ENCODE measurements at regions of chr7 and their contacts with region 1.

Region 1: DNA sequence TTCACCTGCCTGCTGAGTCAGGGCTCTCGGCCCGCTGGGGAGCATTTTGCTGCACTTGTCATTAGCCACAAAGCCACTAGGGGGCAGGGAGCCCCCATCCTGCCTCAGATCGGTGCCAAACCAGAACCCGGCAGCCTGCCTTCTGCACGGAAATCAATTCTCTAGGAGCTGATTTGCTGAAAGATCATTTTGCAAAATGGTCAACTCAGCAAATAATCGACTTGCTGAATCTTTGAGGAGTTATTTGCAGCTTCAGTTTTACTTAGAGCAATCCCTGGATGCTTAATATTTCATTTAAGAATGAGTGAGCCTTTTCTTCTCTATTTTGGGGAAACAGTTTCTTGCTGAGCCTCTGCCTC is 1.7 kb upstream of the GIMAP8 start:
- DNase-seq: peak; percentile 73 to 91 (median 88)
- ATAC-seq: peak; percentile 73
- H3K4me3 ChIP-seq: peak overlapping the region; percentile 65
- H3K4me3 Mint-ChIP-seq: peak overlapping the region; percentile 94 to 100 (median 98)
- H3K27ac ChIP-seq: peak overlapping the region; percentile 84
- H3K27ac Mint-ChIP-seq: peak overlapping the region; percentile 95 to 99 (median 97)
- H3K4me1 ChIP-seq: peaks cover 32 to 36% of the 10 kb centered on the region in 2 donors
- H3K4me1 Mint-ChIP-seq: peaks cover 36 to 54% (median 43%) of the 10 kb centered on the region in 7 donors
- H3K27me3 ChIP-seq: no peaks in the 10 kb centered on the region
- H3K27me3 Mint-ChIP-seq: no peaks in the 10 kb centered on the region

Region 2: DNA sequence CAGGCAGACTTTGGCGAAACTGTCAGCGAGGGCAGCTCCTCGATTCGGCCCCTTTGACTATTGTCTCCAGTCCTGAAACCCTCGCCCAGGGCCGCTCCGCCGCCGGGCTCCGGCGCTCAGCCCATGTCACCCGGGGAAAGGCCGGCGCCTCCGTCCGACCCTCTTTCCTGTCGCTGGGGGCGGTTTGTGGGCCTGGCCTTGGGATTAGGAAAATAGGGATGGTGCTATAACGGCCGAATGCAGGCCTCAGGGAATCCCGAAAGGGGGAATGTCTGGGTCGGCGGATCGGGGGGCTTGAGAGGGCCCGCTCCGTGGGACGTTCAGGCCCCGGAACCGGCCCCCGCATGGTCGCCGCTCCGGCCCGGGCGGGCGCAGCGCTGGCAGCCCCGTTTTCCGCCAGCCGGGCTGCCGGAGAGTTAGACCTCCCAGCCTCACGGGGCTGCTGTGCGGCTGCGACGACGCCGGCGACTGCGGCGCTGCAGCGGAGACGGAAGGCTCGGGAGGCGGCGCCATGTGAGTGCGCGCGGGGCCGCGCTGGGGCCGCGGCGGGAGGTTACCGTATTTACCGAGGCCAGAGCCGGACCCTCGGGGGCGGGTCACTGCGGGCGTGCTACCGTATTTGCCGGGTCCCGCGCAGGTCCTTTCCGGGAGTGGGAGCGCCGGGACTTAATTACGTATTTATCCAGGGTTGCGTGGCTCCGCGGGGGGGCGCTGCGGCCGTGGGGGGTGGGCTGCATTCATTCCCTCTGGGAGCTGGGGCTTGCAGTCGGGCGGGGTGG is 43.8 kb before region 1 on chr7:
- CTCF ChIA-PET with region 1: interaction called, 5 read pairs
- POLR2A ChIA-PET with region 1: interaction called, 4 read pairs
- intact Hi-C with region 1: loop called in 1 of 2 experiments (anchors 2 kb)
- DNase-seq: peak; percentile 65 to 81 (median 74)
- ATAC-seq: peak; percentile 87
- H3K4me3 ChIP-seq: peak overlapping the region; percentile 83
- H3K4me3 Mint-ChIP-seq: peak overlapping the region; percentile 91 to 100 (median 96)
- H3K27ac ChIP-seq: peak overlapping the region; percentile 91
- H3K27ac Mint-ChIP-seq: peak overlapping the region; percentile 92 to 99 (median 96)
- H3K4me1 ChIP-seq: peaks cover 14 to 21% of the 10 kb centered on the region in 2 donors
- H3K4me1 Mint-ChIP-seq: peaks cover 30 to 42% (median 37%) of the 10 kb centered on the region in 7 donors
- H3K27me3 ChIP-seq: no peaks in the 10 kb centered on the region
- H3K27me3 Mint-ChIP-seq: no peaks in the 10 kb centered on the region

Region 3: GRCh38 chr7:150507947-150508602 is 59.3 kb after region 1 on chr7:
- CTCF ChIA-PET with region 1: interaction called, 91 read pairs
- POLR2A ChIA-PET with region 1: interaction called, 829 read pairs
- intact Hi-C with region 1: loop called in 1 of 2 experiments (anchors 1 kb)
- DNase-seq: peak in 1 of 9 donors; percentile 22
- ATAC-seq: peak; percentile 56
- H3K4me3 ChIP-seq: peak overlapping the region; percentile 52
- H3K4me3 Mint-ChIP-seq: peak overlapping the region; percentile 67 to 99 (median 88)
- H3K27ac ChIP-seq: peak overlapping the region; percentile 74
- H3K27ac Mint-ChIP-seq: peak overlapping the region; percentile 92 to 98 (median 95)
- H3K4me1 ChIP-seq: peaks cover 61 to 93% of the 10 kb centered on the region in 2 donors
- H3K4me1 Mint-ChIP-seq: peaks cover 54 to 98% (median 94%) of the 10 kb centered on the region in 7 donors
- H3K27me3 ChIP-seq: no peaks in the 10 kb centered on the region
- H3K27me3 Mint-ChIP-seq: no peaks in the 10 kb centered on the region

Region 4: GRCh38 chr7:150567169-150567568 is 118.4 kb after region 1 on chr7 and contains the start of gene GIMAP4:
- CTCF ChIA-PET with region 1: interaction called, 56 read pairs
- POLR2A ChIA-PET with region 1: interaction called, 455 read pairs
- intact Hi-C with region 1: loop called (anchors 1 kb)
- DNase-seq: peak in 4 of 9 donors; percentile 21 to 53 (median 42)
- ATAC-seq: peak; percentile 58
- H3K4me3 ChIP-seq: peak within 1 kb of the TSS; percentile 92
- H3K4me3 Mint-ChIP-seq: peak within 1 kb of the TSS; percentile 87 to 99 (median 96)
- H3K27ac ChIP-seq: peak within 1 kb of the TSS; percentile 84
- H3K27ac Mint-ChIP-seq: peak within 1 kb of the TSS; percentile 92 to 99 (median 97)
- H3K4me1 ChIP-seq: peaks cover 45 to 68% of the 10 kb centered on the region in 2 donors
- H3K4me1 Mint-ChIP-seq: peaks cover 39 to 81% (median 70%) of the 10 kb centered on the region in 7 donors
- H3K27me3 ChIP-seq: no peaks in the 10 kb centered on the region
- H3K27me3 Mint-ChIP-seq: no peaks in the 10 kb centered on the region
- total RNA-seq, gene GIMAP4: 74.9 to 413 (median 406) TPM

Region 5: GRCh38 chr7:150675714-150676113 is 226.9 kb after region 1 on chr7:
- CTCF ChIA-PET with region 1: no interaction called
- POLR2A ChIA-PET with region 1: interaction called, 34 read pairs
- intact Hi-C with region 1: loop called in 1 of 2 experiments (anchors 2 kb)
- DNase-seq: no peak
- ATAC-seq: no peak
- H3K4me3 ChIP-seq: no peak overlapping the region
- H3K4me3 Mint-ChIP-seq: peak overlapping the region in 9 of 10 donors; percentile 34 to 93 (median 76)
- H3K27ac ChIP-seq: peak overlapping the region; percentile 71
- H3K27ac Mint-ChIP-seq: peak overlapping the region; percentile 82 to 98 (median 94)
- H3K4me1 ChIP-seq: peaks cover 38 to 52% of the 10 kb centered on the region in 2 donors
- H3K4me1 Mint-ChIP-seq: peaks cover 43 to 88% (median 78%) of the 10 kb centered on the region in 7 donors
- H3K27me3 ChIP-seq: no peaks in the 10 kb centered on the region
- H3K27me3 Mint-ChIP-seq: no peaks in the 10 kb centered on the region

Region 6: GRCh38 chr7:150753826-150754603 is 305.2 kb after region 1 on chr7:
- CTCF ChIA-PET with region 1: interaction called, 23 read pairs
- POLR2A ChIA-PET with region 1: interaction called, 184 read pairs
- intact Hi-C with region 1: loop called (anchors 1 kb)
- DNase-seq: peak in 1 of 9 donors; percentile 36
- ATAC-seq: no peak
- H3K4me3 ChIP-seq: no peak overlapping the region
- H3K4me3 Mint-ChIP-seq: peak overlapping the region; percentile 30 to 83 (median 68)
- H3K27ac ChIP-seq: peak overlapping the region; percentile 60
- H3K27ac Mint-ChIP-seq: peak overlapping the region; percentile 88 to 97 (median 95)
- H3K4me1 ChIP-seq: peaks cover 44 to 70% of the 10 kb centered on the region in 2 donors
- H3K4me1 Mint-ChIP-seq: peaks cover 36 to 81% (median 78%) of the 10 kb centered on the region in 7 donors
- H3K27me3 ChIP-seq: no peaks in the 10 kb centered on the region
- H3K27me3 Mint-ChIP-seq: peaks cover 0 to 2% (median 0%) of the 10 kb centered on the region in 5 donors